AG04449 (cell line): ENCODE measurements at regions of chr12 and their contacts with region 1.

Region 1: GRCh38 chr12:1078002-1078401 is 87.0 kb downstream of the ERC1 start:
- DNase-seq: no peak
- H3K4me3 ChIP-seq: no peak overlapping the region
- CTCF ChIP-seq: no peak

Region 2: DNA sequence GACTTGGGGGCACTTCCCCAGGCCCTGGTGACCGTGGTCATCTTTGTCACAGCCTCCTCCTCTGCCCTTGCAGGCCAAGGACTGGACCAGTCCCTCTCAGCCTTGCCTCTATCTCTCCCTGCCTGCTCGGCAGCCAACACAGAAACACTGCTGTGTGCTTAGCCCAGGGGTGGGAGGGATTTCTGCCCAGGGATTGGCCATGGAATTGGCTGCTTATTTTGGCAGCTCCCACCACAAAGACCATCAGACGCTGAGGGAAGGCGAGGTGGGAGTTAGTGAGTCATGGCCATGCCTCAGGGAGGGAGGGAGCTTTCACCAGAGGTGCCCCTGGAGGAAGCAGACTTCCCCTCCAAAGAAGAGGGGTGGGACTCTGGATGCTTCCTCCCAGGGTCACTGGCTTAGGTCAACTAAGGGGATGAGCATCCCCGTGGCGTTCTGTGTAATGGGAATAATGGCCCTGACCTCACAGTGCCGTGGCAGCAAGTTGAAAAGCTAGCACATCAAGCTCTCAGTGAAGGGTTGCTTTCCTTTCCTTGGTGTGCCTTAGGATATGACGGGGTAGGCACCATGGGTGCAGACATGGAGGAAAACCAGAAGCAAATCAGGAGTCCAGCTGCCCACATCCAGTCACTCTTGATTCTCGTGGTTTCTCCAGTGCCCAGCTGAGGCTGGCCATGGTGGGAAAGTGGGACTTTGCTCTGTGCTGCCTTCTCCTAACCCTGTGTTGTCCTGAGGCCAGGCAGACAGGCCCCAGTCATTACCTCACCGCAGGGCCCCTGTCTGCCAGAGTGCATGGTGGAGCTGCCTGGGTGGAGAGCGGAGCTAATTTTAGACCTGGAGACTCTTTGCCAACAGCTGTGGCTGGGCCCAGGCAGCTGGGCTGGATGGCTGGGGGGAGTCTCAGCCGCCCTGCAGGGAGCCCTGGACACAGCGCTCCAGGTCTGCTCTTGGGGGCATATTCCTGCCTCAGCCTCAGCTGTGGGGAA is 596.9 kb before region 1 on chr12:
- CTCF ChIA-PET with region 1: no interaction called
- POLR2A ChIA-PET with region 1: no interaction called
- DNase-seq: no peak
- H3K4me3 ChIP-seq: no peak overlapping the region
- CTCF ChIP-seq: no peak

Region 3: GRCh38 chr12:1003600-1004271 is 74.3 kb before region 1 on chr12:
- CTCF ChIA-PET with region 1: no interaction called
- POLR2A ChIA-PET with region 1: no interaction called
- DNase-seq: no peak
- H3K4me3 ChIP-seq: no peak overlapping the region
- CTCF ChIP-seq: no peak

Region 4: DNA sequence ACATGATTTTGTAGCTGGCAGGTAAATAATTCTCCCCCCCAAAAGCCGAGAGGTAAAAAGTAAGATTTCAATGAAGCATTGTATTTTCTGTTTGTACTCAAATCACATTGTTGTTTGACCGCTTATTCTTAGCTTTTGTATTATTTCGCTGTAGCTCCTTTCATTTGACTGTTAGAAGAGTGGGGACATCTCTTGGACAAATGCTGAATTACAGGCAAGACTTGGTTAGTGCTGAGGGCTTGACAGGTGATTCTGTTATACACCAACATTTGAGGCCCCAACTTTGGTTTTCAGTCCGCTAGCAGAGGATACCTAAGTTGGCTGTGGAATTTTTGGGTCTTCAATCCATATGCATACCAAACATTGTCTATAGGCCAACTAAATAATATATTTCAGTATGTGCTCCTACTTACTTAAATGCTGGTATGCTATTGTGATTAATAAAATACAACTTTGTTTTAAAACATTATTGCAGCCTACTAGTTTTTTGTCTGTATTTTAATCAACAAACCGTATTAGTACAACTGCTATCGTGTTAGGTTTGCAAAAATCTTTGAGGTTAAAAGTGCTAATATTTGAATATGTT is 15.3 kb after region 1 on chr12:
- CTCF ChIA-PET with region 1: interaction called, 22 read pairs
- POLR2A ChIA-PET with region 1: no interaction called
- DNase-seq: no peak
- H3K4me3 ChIP-seq: no peak overlapping the region
- CTCF ChIP-seq: peak; percentile 68